ENCODE measurements at regions of chr18 and their contacts with region 1.

Region 1: DNA sequence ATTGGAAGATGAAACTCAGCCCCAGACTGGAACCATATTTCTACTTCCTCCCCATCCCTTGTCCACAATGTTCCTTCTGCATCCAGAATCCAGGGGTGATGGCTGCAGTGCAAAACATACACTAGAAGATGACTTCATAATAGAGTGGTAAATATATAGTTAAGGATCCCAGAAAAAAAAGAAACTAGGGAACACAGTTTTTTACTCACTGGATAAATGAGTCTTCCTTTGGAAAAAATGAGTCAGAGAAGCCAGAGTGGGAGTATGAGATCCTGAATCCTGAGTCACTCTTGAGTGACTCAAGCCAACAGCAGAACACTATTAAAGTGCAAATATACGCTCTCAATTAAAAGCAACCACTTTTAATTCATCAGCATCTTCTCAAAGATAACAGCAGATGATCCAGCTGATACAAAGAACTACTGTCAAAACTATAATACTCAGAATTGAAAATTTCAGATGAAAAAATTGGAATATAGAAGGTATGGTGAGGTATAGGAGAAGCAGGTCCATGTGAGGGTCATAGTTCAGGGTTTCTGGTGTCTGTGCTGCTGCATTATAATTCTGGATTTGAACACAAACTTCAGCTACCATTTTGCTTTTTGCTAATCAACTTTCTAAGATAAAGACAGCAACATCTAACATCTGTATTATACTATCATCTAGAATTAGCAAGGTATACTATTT is 987.2 kb upstream of the CDH2 start:
- DNase-seq: peak; percentile 96
- ATAC-seq: peak; percentile 66
- H3K4me3 ChIP-seq: no peak overlapping the region
- H3K27ac ChIP-seq: peak overlapping the region; percentile 85
- H3K4me1 ChIP-seq: peaks cover 63% of the 10 kb centered on the region
- H3K27me3 ChIP-seq: no peaks in the 10 kb centered on the region
- CTCF ChIP-seq: no peak

Region 2: DNA sequence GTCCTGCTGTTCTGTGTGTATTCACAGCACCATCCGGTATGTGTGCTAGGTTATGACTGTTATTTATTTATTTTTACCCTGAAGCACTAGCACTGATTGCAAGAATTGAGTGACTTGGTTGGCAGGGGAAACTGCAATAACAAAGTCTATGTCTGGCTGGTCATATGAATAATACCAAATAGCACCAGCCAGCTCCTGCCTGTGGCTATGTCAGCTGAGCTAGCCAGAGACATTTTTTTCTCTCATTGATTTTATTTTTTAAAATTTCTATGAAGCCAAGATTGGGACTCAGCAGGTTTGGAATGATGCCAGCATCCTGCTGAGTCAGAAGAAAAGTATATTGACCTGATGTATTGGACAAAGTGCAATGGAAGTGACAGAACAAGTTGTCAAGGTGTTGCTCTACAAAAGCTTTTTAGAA is 798.7 kb before region 1 on chr18:
- CTCF ChIA-PET with region 1: no interaction called
- POLR2A ChIA-PET with region 1: no interaction called
- intact Hi-C with region 1: loop called (anchors 10 kb)
- DNase-seq: peak; percentile 93
- ATAC-seq: peak; percentile 80
- H3K4me3 ChIP-seq: no peak overlapping the region
- H3K27ac ChIP-seq: peak overlapping the region; percentile 53
- H3K4me1 ChIP-seq: peaks cover 23% of the 10 kb centered on the region
- H3K27me3 ChIP-seq: no peaks in the 10 kb centered on the region
- CTCF ChIP-seq: no peak

Region 3: DNA sequence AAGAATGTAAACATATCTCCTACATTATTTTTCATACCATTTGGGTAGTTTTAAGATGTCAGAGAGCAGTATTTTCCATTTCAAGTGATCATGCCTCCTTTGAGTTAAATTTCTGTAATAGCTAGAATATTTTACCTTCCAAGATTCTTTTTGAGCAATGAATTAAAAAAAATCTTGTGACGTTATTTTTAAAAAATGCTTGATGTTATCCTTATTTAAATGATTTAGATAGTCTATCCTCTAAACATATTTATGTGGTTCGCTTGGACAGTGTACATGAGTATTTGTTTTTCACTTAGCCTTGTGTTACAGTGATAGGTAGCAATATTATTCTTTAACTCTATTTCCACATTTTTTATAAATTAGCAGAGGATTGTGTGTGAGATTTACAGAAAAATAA is 348.0 kb before region 1 on chr18:
- CTCF ChIA-PET with region 1: no interaction called
- POLR2A ChIA-PET with region 1: no interaction called
- intact Hi-C with region 1: loop called (anchors 10 kb)
- DNase-seq: no peak
- ATAC-seq: no peak
- H3K4me3 ChIP-seq: no peak overlapping the region
- H3K27ac ChIP-seq: no peak overlapping the region
- H3K4me1 ChIP-seq: peaks cover 14% of the 10 kb centered on the region
- H3K27me3 ChIP-seq: no peaks in the 10 kb centered on the region
- CTCF ChIP-seq: no peak

Region 4: GRCh38 chr18:29060349-29060748 is 103.8 kb before region 1 on chr18:
- CTCF ChIA-PET with region 1: no interaction called
- POLR2A ChIA-PET with region 1: no interaction called
- intact Hi-C with region 1: no loop called
- DNase-seq: no peak
- ATAC-seq: no peak
- H3K4me3 ChIP-seq: no peak overlapping the region
- H3K27ac ChIP-seq: no peak overlapping the region
- H3K4me1 ChIP-seq: no peaks in the 10 kb centered on the region
- H3K27me3 ChIP-seq: no peaks in the 10 kb centered on the region
- CTCF ChIP-seq: 0 out of 2 replicates have a peak, but pooled peaks have one; percentile 10

Region 5: DNA sequence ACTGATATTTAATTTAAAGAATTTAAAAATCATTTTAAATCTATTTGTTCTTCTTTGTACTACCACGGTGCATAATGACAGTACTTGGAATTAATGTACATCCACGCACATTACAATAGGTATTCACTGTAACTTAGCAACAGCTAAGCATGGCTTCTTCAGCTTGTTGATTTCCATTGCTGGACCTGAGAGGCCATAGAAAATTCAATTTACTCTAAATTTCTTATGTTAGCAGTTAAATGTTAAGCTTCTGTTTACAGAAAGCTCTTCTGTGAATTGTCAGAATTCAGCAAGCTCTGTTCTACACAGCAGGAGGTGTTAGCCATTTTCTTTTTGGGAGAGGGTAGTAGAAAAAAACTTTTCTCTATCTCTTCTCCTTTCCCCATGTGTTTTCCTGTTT is 162.1 kb after region 1 on chr18:
- CTCF ChIA-PET with region 1: no interaction called
- POLR2A ChIA-PET with region 1: no interaction called
- intact Hi-C with region 1: loop called (anchors 2 kb)
- DNase-seq: no peak
- ATAC-seq: no peak
- H3K4me3 ChIP-seq: no peak overlapping the region
- H3K27ac ChIP-seq: no peak overlapping the region
- H3K4me1 ChIP-seq: peaks cover 13% of the 10 kb centered on the region
- H3K27me3 ChIP-seq: no peaks in the 10 kb centered on the region
- CTCF ChIP-seq: no peak